Activated CD8-positive, alpha-beta T cell treated with anti-CD3 and anti-CD28 coated beads, Interleukin-2, amount 10 ng/mL, durations not matched to agents 7 days and 5 days (primary cell): ENCODE measurements at regions of chr14 and their contacts with region 1.

Region 1: GRCh38 chr14:61694830-61695694 is at the start of gene HIF1A:
- DNase-seq: peak; percentile 98
- ATAC-seq: peak; percentile 94
- H3K4me3 Mint-ChIP-seq: peak within 1 kb of the TSS; percentile 98
- H3K27ac Mint-ChIP-seq: peak within 1 kb of the TSS; percentile 96
- H3K4me1 Mint-ChIP-seq: peaks cover 56% of the 10 kb centered on the region
- H3K27me3 Mint-ChIP-seq: no peaks in the 10 kb centered on the region
- total RNA-seq, gene HIF1A: 119 to 132 TPM

Region 2: DNA sequence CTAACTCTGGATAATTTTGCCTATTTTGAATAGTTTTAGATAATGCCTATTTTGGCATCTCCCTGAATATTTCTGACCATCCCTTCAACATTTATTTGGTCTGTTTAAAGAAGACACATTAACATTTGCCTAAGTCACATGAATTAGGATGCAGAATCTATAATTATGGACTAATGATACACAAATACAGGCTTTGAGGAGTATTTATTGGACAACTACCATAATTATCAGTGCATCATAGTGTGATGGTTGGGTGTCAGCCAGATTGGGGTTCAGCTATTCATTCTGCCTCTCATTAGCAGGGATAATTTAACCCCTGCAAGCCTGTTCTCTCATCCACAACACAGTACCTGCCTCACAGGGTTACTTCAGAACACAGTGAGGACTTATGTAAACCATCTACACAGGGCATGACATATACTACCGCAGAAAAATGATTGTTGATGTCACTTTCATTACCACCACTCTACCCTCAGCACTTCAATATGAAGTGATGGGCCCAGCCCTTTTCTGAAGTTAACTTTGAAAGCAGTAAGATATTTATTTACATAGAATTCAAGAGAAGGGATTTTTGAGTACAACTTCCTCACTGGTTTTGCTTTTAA is 359.3 kb before region 1 on chr14:
- CTCF ChIA-PET with region 1: no interaction called
- POLR2A ChIA-PET with region 1: interaction called, 10 read pairs
- DNase-seq: peak; percentile 55
- ATAC-seq: peak; percentile 45
- H3K4me3 Mint-ChIP-seq: peak overlapping the region; percentile 74
- H3K27ac Mint-ChIP-seq: peak overlapping the region; percentile 88
- H3K4me1 Mint-ChIP-seq: peaks cover 84% of the 10 kb centered on the region
- H3K27me3 Mint-ChIP-seq: no peaks in the 10 kb centered on the region

Region 3: DNA sequence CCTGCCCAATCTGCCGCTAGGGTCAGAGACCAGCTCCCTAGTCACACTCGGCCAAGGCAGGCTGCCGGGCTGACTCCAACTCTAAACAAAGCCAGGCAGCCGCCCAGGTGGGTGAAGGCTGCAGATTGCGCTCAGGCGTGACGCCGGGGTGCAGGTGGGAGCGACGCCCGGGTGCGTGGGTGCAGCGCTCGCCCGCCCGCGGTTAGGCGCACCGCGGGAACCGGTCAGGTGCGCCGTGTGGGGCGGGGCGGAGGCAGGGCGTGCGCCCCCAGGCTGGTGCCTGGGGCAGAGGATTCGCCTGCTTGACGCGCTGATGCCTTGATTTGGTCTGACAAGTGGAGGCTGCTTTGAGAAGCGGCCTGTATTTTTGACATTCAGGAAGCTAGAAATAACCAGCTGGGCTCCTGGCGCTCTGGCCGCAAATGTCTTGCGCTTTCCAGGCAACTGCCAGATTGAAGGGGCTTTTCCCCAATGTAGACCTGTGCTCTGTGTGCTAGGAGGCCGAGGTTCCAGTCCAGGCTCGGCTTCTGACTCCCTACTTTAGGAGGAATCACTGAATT is 126.4 kb before region 1 on chr14:
- CTCF ChIA-PET with region 1: interaction called, 12 read pairs
- POLR2A ChIA-PET with region 1: interaction called, 10 read pairs
- DNase-seq: peak; percentile 61
- ATAC-seq: peak; percentile 79
- H3K4me3 Mint-ChIP-seq: peak overlapping the region; percentile 63
- H3K27ac Mint-ChIP-seq: peak overlapping the region; percentile 84
- H3K4me1 Mint-ChIP-seq: peaks cover 47% of the 10 kb centered on the region
- H3K27me3 Mint-ChIP-seq: no peaks in the 10 kb centered on the region

Region 4: DNA sequence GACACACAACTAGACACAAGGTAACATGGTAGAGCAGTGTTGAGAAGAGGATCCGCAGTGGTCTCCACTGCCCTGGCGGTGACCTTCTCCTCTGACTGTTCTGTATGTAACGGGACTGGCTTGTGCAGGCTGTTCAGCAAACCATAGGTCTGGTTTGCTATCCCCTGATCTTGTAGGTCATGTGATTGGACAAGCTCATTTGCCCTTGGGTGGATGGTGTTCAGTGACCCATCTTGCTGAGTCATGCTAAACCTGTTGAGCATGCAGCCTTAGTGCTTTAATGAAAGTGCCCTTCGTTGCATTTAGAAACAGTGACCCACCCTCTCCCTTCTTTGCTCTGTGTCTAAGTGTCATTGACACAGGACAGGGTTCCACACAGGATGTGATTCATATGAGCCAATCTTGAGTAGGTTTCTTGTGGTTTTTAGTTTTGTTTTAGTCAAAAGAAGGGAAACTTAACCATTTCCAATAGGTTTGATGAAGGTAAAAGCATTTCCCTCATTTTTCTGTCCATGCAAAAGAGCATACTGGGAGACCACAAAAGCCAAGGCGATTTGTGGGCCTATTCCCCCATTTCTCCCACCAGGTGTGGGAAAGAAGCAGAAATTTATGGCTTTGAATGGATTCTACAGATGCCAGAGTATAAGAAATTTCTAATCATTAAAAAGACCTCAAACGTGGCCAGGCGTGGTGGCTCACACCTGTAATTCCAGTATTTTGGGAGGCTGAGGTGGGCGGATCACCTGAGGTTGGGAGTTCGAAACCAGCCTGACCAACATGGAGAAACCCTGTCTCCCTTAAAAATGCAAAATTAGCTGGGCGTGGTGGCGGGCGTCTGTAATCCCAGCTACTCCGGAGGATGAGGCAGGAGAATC is 32.4 kb before region 1 on chr14:
- CTCF ChIA-PET with region 1: interaction called, 6 read pairs
- POLR2A ChIA-PET with region 1: interaction called, 31 read pairs
- DNase-seq: peak; percentile 85
- ATAC-seq: peak; percentile 82
- H3K4me3 Mint-ChIP-seq: peak overlapping the region; percentile 71
- H3K27ac Mint-ChIP-seq: peak overlapping the region; percentile 98
- H3K4me1 Mint-ChIP-seq: peaks cover 73% of the 10 kb centered on the region
- H3K27me3 Mint-ChIP-seq: no peaks in the 10 kb centered on the region

Region 5: DNA sequence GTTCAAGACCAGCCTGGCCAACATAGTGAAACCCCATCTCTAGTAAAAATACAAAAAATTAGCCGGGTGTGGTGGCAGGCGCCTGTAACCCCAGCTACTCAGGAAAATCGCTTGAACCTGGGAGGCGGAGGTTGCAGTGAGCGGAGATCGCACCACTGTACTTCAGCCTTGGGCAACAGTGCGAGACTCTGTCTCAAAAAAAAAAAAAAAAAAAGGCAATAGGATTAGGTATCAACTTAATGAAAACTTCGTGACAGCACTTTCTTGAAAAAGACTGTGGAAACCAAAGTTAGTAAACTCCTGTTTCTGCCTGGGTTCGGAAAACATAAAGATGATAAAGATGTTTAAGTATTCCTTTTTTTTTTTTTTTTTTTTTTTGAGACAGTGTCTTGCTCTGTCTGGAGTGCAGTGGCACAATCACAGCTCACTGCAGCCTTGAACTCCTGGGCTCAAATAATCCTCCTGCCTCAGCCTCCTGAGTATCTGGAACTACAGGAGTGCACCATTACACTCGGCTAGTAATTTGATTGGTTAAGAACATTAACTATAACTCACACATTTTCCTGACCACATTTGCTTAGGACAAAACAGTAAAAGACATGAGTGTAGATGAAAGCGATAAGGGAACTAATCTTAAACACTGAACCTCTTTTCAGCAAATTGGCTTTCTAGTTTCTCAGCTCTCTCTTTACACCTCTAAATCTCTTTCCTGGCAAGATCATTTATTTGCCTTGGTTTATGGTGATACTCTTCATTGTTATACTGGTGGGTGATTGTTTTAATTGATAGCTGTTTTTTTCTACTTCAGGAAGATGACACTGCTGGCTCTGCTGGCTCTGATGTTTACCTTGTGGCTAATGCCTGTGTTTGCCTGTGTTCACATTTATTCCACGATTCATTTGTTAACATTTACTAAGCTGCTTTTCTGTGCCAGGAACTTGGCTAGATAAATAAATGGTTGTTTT is 16.1 kb after region 1 on chr14:
- CTCF ChIA-PET with region 1: interaction called, 4 read pairs
- POLR2A ChIA-PET with region 1: interaction called, 11 read pairs
- DNase-seq: no peak
- ATAC-seq: peak; percentile 40
- H3K4me3 Mint-ChIP-seq: no peak overlapping the region
- H3K27ac Mint-ChIP-seq: no peak overlapping the region
- H3K4me1 Mint-ChIP-seq: peaks cover 81% of the 10 kb centered on the region
- H3K27me3 Mint-ChIP-seq: no peaks in the 10 kb centered on the region

Region 6: DNA sequence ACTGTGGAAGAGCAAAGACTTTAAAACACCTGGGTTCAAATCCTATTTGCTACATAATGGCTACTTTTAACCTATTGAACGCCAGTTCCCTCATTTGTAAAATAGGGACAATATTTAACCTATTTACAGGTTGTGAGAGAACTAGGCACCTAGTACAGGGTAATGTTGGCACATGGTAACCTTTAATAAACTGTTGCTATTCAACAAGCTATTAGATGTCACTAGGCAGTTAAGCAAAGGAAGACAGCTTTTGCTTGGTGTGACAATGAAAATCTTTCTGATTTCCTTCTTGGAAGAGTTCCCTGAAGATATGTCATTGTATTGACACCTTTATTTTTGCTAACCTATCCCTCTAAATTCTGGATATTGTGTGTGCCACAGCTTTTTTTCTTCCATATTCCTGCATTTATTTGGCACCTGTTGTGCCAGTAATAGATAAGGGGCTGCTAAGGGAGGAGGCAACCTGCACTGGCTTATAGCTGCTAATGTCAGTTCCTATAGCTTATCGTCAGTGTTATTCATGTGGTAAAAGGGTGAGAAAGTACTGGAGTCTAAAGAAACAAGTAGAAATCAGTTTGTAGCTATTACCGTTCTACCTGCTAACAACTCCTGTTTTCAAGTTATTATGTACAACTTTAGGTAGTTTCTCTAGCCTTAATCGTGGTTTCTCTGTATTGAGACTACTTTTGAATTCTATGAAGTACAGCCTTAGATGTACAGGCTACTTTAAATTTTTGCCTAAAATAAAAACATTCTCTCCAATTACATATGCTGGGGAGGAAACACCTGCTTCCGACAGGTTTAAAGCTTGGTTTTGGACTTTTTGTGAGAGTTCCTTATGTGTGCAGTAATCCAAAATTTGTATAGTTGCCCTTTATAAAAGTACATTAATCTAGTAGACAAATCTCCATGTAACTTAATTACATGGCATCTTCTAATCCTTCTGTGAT is 24.6 kb after region 1 on chr14:
- CTCF ChIA-PET with region 1: interaction called, 7 read pairs
- POLR2A ChIA-PET with region 1: interaction called, 11 read pairs
- DNase-seq: no peak
- ATAC-seq: peak; percentile 72
- H3K4me3 Mint-ChIP-seq: peak overlapping the region; percentile 20
- H3K27ac Mint-ChIP-seq: peak overlapping the region; percentile 56
- H3K4me1 Mint-ChIP-seq: peaks cover 69% of the 10 kb centered on the region
- H3K27me3 Mint-ChIP-seq: no peaks in the 10 kb centered on the region